Breast epithelium (tissue), 4 donors: ENCODE measurements at regions of chr12 and their contacts with region 1.

Region 1: DNA sequence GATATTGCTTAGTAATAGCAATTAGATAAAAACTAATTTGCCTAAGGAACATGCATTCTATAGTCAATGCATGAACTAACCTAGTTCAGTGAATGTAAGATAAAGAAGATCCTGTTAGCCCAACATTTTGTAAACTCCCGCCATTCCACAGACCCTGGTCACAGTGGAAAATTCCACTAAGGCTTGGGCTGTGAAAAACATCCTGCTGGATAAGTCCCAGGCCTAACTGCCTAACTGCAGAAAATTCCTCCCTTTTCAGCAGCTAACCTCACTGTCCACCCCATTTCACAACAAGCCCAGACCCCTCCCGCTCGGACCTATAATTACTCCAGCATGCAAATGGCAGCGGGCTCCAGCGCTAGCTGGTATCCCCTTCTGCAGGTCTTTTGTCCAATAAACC is 97.9 kb upstream of the GARIN6 start:
- DNase-seq: no peak
- H3K4me3 ChIP-seq: no peak overlapping the region
- H3K27ac ChIP-seq: no peak overlapping the region
- H3K4me1 ChIP-seq: no peaks in the 10 kb centered on the region
- H3K27me3 ChIP-seq: no peaks in the 10 kb centered on the region
- CTCF ChIP-seq: no peak
- POLR2A ChIP-seq: no peak

Region 2: DNA sequence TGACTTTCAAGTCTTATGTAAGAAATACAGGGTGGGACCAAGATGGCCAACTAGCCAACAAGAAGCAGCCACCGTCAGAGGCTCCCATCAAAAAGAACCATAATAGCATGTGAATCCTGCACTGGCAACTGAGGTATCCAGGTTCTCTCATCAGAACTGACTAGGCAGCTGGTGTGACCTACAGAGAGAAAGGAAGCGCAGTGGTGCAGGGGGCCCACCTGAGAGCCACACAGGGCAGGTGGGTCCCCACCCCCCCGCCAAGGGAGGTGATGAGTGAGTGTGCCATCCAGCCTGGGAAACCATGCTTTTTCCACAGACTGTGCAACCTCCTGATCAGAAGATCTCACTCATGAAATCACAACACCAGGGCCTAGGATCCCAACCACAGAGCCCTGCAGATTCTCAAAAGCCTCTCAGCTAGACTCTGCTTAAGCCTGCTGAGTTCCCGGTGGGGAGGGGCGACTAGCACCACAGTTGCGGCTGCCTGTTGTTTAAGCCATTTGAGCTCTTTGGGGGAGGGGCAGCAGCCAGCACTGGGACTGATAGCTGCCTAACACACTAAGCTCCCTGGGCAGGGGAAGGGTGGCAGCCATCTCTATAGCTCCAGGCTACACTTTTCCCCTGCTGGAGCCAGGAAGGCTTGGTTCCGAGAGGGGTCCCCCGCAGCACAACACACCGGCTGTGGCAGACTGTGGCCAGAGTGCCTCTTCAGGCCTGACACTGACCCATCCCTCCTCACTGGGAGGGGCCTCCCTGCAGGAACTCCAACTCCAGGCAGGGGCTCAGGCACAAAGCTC is 173.2 kb after region 1 on chr12:
- intact Hi-C with region 1: loop called (anchors 5 kb)
- DNase-seq: no peak
- H3K4me3 ChIP-seq: no peak overlapping the region
- H3K27ac ChIP-seq: no peak overlapping the region
- H3K4me1 ChIP-seq: no peaks in the 10 kb centered on the region
- H3K27me3 ChIP-seq: no peaks in the 10 kb centered on the region
- CTCF ChIP-seq: no peak
- POLR2A ChIP-seq: no peak